AG04449 (cell line): ENCODE measurements at regions of chr2 and their contacts with region 1.

Region 1: DNA sequence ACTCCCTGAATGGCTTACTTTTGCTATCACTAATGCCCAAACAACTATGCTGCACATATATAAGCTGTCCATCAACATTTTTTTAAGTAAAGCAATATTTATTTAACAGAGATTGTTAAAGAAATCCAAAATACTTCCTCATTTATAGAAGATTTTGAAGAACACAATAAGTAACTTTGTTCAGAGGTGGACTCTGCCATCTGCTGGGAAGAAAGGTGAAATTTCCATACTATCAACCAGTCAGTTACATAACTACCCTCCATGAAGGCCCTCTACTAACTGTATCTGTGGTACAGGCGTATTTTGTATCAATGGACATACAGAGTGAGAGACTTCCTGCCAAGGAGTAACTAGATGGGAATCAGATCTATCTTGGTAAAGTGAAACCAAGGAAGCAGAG is 106.0 kb downstream of the DTNB start:
- DNase-seq: no peak
- H3K4me3 ChIP-seq: no peak overlapping the region
- CTCF ChIP-seq: peak; percentile 30

Region 2: GRCh38 chr2:24559475-24560109 is 1007.8 kb before region 1 on chr2:
- CTCF ChIA-PET with region 1: no interaction called
- POLR2A ChIA-PET with region 1: no interaction called
- DNase-seq: peak; percentile 12
- H3K4me3 ChIP-seq: no peak overlapping the region
- CTCF ChIP-seq: no peak

Region 3: GRCh38 chr2:25276569-25277465 is 290.6 kb before region 1 on chr2:
- CTCF ChIA-PET with region 1: interaction called, 12 read pairs
- POLR2A ChIA-PET with region 1: no interaction called
- DNase-seq: no peak
- H3K4me3 ChIP-seq: no peak overlapping the region
- CTCF ChIP-seq: peak; percentile 66

Region 4: DNA sequence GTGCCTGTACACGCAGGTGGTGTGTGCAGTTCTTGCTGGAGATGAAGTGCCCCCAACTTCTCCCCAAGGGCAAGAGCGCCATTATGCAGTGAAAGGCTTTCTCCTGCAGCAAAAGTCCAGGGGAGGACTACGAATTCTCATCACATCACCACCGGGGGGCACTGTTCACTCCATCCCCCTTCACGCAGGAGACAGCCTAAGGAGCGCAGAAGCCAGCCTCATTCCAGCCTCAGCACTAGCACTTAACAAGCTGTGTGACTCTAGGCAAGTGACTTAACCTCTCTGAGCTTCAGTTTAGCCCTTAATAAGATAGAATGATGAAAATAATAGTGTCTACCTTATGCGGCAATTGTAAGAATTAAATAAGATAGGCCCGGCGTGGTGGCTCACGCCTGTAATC is 258.0 kb before region 1 on chr2:
- CTCF ChIA-PET with region 1: interaction called, 27 read pairs
- POLR2A ChIA-PET with region 1: no interaction called
- DNase-seq: no peak
- H3K4me3 ChIP-seq: no peak overlapping the region
- CTCF ChIP-seq: peak; percentile 47

Region 5: DNA sequence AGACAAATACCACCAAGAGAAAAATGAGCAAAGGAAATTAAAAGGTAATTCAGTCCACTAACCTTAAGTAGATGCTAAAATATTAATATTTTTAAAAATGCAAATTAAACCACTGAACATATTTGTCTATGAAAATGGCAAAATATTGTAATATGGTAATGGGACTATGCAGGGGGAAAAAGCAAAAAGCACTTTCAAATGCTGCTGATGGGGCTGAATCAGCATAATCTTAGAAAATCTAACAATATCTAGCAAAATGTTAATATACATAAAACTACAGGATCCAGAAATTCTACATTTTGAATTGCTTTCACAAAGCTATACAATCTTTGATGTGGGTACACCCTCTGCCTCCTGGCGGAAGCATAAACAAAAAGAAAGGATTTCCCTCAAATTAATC is 192.9 kb after region 1 on chr2:
- CTCF ChIA-PET with region 1: no interaction called
- POLR2A ChIA-PET with region 1: no interaction called
- DNase-seq: no peak
- H3K4me3 ChIP-seq: no peak overlapping the region
- CTCF ChIP-seq: no peak